Ascending aorta (tissue), 2 donors: ENCODE measurements at regions of chr19 and their contacts with region 1.

Region 1: DNA sequence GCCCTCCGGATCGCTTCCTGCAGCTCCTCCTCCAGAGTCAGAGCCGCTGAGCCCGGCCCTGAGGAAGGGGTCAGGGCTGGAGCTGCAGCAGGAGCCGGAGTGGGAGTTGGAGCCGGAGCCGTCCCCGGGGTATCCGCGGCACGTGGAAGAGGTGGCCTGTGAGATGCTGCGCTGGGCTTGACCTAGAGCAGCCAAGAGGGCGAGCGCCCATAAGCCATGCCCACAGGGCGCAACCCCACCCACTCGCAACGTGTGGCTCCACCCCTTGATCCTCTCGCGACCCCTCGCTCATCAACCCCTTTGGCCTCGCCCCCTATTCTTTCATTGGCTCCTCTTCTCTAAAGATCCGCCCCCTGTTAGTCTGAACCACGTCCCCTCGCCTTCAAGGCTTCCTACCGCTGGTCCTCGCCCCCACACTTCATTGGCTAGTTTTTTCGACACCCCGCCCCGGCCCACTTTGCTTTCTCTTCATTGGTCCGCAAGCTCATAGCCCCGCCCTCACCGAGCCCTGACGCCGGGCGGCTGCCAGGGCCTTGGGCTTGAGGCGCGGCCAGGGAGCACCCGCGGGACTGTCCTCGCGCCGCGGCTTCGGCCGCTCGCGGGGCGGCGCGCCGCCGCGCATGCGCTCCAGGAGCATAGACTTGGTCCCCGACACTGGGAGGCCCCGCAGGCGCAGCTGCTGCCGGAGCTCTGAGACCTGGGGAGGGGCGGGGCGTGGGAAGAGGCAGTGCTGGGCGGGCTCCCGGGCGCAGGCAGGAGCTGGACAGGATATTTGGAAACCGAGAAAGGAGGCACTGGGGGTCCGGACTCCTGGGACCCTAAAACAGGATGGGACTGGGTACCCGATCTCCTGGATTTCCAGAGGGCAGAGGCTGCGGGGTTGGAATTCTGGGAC is 5.4 kb downstream of the MAMSTR start:
- DNase-seq: peak; percentile 97 to 99
- H3K4me3 ChIP-seq: peak overlapping the region; percentile 64 to 75
- H3K27ac ChIP-seq: peak overlapping the region; percentile 69 to 79
- H3K4me1 ChIP-seq: peaks cover 12 to 18% of the 10 kb centered on the region in 2 donors
- H3K27me3 ChIP-seq: no peaks in the 10 kb centered on the region
- CTCF ChIP-seq: no peak

Region 2: GRCh38 chr19:48351341-48351752 is 362.8 kb before region 1 on chr19:
- intact Hi-C with region 1: no loop called
- DNase-seq: peak in 1 of 2 donors; percentile 82
- H3K4me3 ChIP-seq: no peak overlapping the region
- H3K27ac ChIP-seq: no peak overlapping the region
- H3K4me1 ChIP-seq: no peaks in the 10 kb centered on the region
- H3K27me3 ChIP-seq: no peaks in the 10 kb centered on the region
- CTCF ChIP-seq: peak; percentile 48 to 72 (median 61)

Region 3: GRCh38 chr19:48660854-48661731 is 53.0 kb before region 1 on chr19:
- intact Hi-C with region 1: no loop called
- DNase-seq: peak; percentile 73 to 93
- H3K4me3 ChIP-seq: no peak overlapping the region
- H3K27ac ChIP-seq: peak overlapping the region in 1 of 2 donors; percentile 50
- H3K4me1 ChIP-seq: no peaks in the 10 kb centered on the region
- H3K27me3 ChIP-seq: no peaks in the 10 kb centered on the region
- CTCF ChIP-seq: no peak

Region 4: DNA sequence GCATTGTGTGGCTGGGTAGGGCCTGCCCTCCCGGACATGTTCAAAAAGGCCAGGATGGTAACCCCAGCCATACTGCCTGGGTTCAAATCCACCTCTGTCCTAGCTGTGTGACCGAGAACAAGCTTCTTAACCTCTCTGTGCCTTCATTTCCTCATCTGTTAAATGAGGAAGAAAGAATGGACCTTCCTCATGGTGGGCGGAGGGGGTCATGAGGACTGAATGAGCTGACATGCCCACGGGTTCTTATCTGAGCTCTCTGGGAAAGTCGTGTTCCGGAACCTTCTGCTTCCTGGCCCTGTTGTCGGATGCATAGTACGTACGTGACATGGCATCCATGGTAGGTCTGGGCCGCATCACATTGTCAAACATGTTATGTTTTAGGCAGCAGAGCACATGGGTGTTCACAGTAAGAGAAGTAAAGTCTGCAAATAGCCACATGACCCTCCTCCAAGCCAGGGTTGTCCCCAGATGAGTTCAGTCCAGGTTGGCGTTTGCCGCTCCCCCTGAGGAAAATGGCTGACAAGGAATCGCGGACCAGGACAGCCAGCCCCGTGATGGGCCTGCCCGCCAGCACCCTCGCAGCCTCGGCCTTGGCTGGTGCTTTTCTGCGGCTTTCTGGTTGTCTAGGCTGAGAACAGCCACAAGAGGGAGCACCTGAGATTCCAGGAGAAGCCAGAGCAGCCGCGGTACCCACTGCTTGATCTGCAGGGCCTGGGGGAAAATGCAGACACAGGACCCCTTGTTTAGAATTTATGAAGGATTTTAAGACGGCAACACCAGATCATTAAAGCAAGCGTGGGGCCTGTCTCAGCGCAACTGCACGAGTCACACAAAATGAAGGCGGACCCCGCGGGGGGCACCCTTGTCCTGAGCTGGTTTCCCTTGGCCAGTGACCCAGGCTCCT is 38.9 kb before region 1 on chr19:
- intact Hi-C with region 1: loop called (anchors 2 kb)
- DNase-seq: peak; percentile 20 to 90
- H3K4me3 ChIP-seq: no peak overlapping the region
- H3K27ac ChIP-seq: no peak overlapping the region
- H3K4me1 ChIP-seq: peaks cover 0 to 2% of the 10 kb centered on the region in 2 donors
- H3K27me3 ChIP-seq: no peaks in the 10 kb centered on the region
- CTCF ChIP-seq: peak; percentile 84 to 89 (median 86)

Region 5: DNA sequence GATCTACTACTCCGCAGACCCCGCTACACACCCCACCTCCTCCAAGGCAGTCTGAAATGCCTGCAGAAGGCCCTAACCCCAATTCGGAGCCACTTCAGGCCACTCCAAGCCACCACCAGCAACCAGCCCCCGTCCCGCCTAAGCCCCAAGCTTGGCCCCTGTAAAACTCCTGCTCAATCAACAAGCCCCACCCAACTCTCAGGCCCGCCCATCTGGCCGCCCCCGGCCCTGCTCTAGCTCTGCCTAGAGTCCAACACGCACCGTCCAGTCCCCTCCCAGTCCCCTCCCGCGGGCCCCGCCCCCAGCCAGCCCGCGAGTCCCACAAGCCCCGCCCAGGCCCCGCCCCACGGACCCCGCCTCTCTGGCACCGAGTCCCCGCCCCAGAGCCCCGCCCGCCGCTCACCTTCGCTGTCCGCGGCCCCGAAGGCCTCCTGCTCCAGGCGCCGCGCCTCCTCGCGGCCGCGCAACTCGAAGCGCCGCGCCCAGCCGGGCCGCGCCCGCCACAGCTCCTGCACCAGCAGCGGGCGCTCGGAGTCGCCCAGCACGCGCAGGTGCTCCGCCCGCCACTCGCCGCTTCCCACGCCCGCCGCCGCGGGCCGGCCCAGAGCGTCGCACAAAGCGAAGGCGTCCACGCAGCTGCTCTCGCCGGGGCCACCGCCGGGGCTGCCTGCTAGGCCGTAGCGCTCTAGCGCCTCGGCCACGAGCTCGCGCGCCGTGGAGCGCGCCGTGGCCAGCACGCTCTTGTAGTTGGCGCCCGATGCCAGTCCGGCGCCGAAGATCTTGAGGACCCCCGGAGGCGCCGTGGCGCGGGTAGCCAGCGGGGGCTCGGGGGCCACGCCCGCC is 24.7 kb after region 1 on chr19:
- intact Hi-C with region 1: loop called (anchors 1 kb)
- DNase-seq: peak; percentile 53 to 91
- H3K4me3 ChIP-seq: peak overlapping the region; percentile 55 to 77
- H3K27ac ChIP-seq: peak overlapping the region in 1 of 2 donors; percentile 24
- H3K4me1 ChIP-seq: peaks cover 5 to 9% of the 10 kb centered on the region in 2 donors
- H3K27me3 ChIP-seq: no peaks in the 10 kb centered on the region
- CTCF ChIP-seq: peak in 2 of 3 experiments; percentile 11 to 62

Region 6: GRCh38 chr19:48835734-48836088 is 121.6 kb after region 1 on chr19:
- intact Hi-C with region 1: loop called (anchors 5 kb)
- DNase-seq: peak; percentile 89 to 98
- H3K4me3 ChIP-seq: peak overlapping the region; percentile 59 to 67
- H3K27ac ChIP-seq: peak overlapping the region; percentile 88 to 94
- H3K4me1 ChIP-seq: peaks cover 3 to 8% of the 10 kb centered on the region in 2 donors
- H3K27me3 ChIP-seq: no peaks in the 10 kb centered on the region
- CTCF ChIP-seq: peak; percentile 82 to 96 (median 85)